ENCODE measurements at regions of chr2 and their contacts with region 1.

Region 1: GRCh38 chr2:203238704-203239526 is at the start of gene CYP20A1:
- DNase-seq: peak; percentile 98
- H3K4me3 Mint-ChIP-seq: peak within 1 kb of the TSS; percentile 86
- H3K27ac Mint-ChIP-seq: peak within 1 kb of the TSS; percentile 94
- H3K4me1 Mint-ChIP-seq: peaks cover 32% of the 10 kb centered on the region
- H3K27me3 Mint-ChIP-seq: no peaks in the 10 kb centered on the region
- total RNA-seq, gene CYP20A1: 22.1 to 24.4 TPM

Region 2: GRCh38 chr2:202375609-202376408 is 863.1 kb before region 1 on chr2 and contains the start of gene BMPR2:
- CTCF ChIA-PET with region 1: no interaction called
- POLR2A ChIA-PET with region 1: no interaction called
- intact Hi-C with region 1: loop called (anchors 2 kb)
- DNase-seq: peak; percentile 88
- H3K4me3 Mint-ChIP-seq: peak within 1 kb of the TSS; percentile 98
- H3K27ac Mint-ChIP-seq: peak within 1 kb of the TSS; percentile 80
- H3K4me1 Mint-ChIP-seq: peaks cover 24% of the 10 kb centered on the region
- H3K27me3 Mint-ChIP-seq: no peaks in the 10 kb centered on the region
- total RNA-seq, gene BMPR2: 8.2 to 8.7 TPM

Region 3: GRCh38 chr2:202911512-202912341 is 327.2 kb before region 1 on chr2 and contains the starts of genes CARF and WDR12:
- CTCF ChIA-PET with region 1: interaction called, 7 read pairs
- POLR2A ChIA-PET with region 1: interaction called, 16 read pairs
- intact Hi-C with region 1: loop called (anchors 1 kb)
- DNase-seq: peak; percentile 94
- H3K4me3 Mint-ChIP-seq: peak within 1 kb of the TSS; percentile 98
- H3K27ac Mint-ChIP-seq: peak within 1 kb of the TSS; percentile 93
- H3K4me1 Mint-ChIP-seq: peaks cover 32% of the 10 kb centered on the region
- H3K27me3 Mint-ChIP-seq: no peaks in the 10 kb centered on the region
- total RNA-seq, gene CARF: 5.2 to 6.6 TPM
- total RNA-seq, gene WDR12: 86.1 to 97.8 TPM

Region 4: DNA sequence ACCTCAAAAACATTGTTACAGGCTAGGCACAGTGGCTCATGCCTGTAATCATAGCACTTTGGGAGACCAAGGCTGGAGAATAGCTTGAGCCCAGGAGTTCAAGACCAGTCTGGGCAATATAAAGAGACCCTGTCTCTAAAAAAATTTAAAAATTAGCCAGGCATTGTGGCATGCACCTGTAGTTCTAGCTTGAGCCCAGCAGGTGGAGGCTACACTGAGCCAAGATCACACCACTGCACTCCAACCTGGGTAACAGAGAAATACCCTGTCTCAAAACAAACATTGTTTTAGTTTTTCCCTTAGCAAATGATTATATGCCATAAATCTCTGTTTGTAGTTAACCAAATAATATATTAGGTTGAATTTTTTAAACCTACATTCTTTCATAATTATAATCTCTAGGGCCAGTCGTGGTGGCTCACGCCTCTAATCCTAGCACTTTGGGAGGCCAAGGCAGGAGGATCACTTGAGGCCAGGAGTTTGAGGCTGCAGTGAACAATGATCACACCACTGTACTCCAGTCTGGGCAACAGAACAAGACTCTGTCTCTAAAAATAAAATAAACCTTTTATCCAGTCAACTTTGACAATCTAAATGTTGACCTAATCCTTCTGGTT is 13.4 kb before region 1 on chr2:
- CTCF ChIA-PET with region 1: interaction called, 15 read pairs
- POLR2A ChIA-PET with region 1: no interaction called
- intact Hi-C with region 1: no loop called
- DNase-seq: peak; percentile 38
- H3K4me3 Mint-ChIP-seq: no peak overlapping the region
- H3K27ac Mint-ChIP-seq: no peak overlapping the region
- H3K4me1 Mint-ChIP-seq: no peaks in the 10 kb centered on the region
- H3K27me3 Mint-ChIP-seq: no peaks in the 10 kb centered on the region

Region 5: GRCh38 chr2:203261326-203262159 is 22.6 kb after region 1 on chr2:
- CTCF ChIA-PET with region 1: no interaction called
- POLR2A ChIA-PET with region 1: no interaction called
- intact Hi-C with region 1: no loop called
- DNase-seq: no peak
- H3K4me3 Mint-ChIP-seq: no peak overlapping the region
- H3K27ac Mint-ChIP-seq: no peak overlapping the region
- H3K4me1 Mint-ChIP-seq: peaks cover 10% of the 10 kb centered on the region
- H3K27me3 Mint-ChIP-seq: no peaks in the 10 kb centered on the region

Region 6: DNA sequence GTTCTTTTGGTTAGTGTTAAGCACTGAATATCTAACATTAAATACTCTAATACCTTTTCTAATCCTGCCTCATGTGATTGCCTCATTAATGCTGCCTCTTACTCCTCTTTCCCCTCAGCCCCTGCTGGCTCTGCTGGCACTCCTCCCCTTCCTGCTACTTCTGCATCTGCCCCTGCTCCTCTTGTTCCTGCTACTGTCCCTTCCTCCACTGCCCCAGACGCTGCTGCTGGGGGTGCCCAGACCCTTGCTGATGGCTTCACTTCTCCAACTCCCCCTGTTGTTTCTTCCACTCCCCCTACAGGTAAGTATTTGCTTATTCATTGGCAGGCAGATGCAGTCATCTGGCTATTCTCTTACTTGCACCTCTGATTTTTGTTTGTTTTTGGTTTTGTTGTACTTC is 157.8 kb after region 1 on chr2:
- CTCF ChIA-PET with region 1: no interaction called
- POLR2A ChIA-PET with region 1: no interaction called
- intact Hi-C with region 1: no loop called
- DNase-seq: no peak
- H3K4me3 Mint-ChIP-seq: no peak overlapping the region
- H3K27ac Mint-ChIP-seq: no peak overlapping the region
- H3K4me1 Mint-ChIP-seq: no peaks in the 10 kb centered on the region
- H3K27me3 Mint-ChIP-seq: no peaks in the 10 kb centered on the region

Region 7: GRCh38 chr2:203535078-203535783 is 296.3 kb after region 1 on chr2 and contains the start of gene RAPH1:
- CTCF ChIA-PET with region 1: no interaction called
- POLR2A ChIA-PET with region 1: no interaction called
- intact Hi-C with region 1: loop called (anchors 1 kb)
- DNase-seq: peak; percentile 79
- H3K4me3 Mint-ChIP-seq: peak within 1 kb of the TSS; percentile 82
- H3K27ac Mint-ChIP-seq: peak within 1 kb of the TSS; percentile 67
- H3K4me1 Mint-ChIP-seq: peaks cover 31% of the 10 kb centered on the region
- H3K27me3 Mint-ChIP-seq: peaks cover 14% of the 10 kb centered on the region
- total RNA-seq, gene RAPH1: 11.5 to 13.1 TPM

Region 8: DNA sequence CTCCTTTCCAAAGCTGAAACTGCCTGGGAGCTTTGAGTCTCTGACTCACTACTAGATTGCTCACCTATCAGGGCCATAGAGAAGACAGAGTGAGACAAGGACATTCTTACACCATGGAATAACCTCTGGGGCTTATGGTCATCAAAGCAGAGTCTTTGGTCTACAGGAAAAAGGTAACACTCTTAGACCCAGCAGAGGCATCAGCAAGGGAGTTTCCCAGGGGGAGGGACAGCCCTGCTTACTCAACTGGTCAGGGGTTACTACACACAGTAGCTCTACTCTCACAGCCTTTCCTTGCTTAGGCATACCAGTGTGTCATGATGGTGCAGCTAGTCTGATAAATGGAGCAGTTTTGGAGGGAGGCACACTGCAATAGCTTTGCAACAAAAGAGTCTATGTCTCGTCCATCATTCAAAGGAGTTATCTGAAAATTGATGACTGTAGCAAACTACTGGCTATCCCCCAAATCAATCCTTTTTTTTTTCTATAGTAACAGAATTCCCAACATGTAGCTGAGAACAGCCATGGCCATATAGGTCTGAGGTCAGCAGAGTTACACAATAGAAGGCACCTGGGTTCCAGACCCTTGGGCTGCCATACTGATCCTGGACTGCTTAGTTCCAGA is 445.1 kb after region 1 on chr2:
- CTCF ChIA-PET with region 1: no interaction called
- POLR2A ChIA-PET with region 1: no interaction called
- intact Hi-C with region 1: no loop called
- DNase-seq: peak; percentile 76
- H3K4me3 Mint-ChIP-seq: no peak overlapping the region
- H3K27ac Mint-ChIP-seq: peak overlapping the region; percentile 11
- H3K4me1 Mint-ChIP-seq: peaks cover 30% of the 10 kb centered on the region
- H3K27me3 Mint-ChIP-seq: no peaks in the 10 kb centered on the region

Measured in activated CD4-positive, alpha-beta memory T cell treated with anti-CD3 and anti-CD28 coated beads for 36 hours (primary cell).